CD4-positive, alpha-beta T cell (primary cell): ENCODE measurements at regions of chr5 and their contacts with region 1.

Region 1: DNA sequence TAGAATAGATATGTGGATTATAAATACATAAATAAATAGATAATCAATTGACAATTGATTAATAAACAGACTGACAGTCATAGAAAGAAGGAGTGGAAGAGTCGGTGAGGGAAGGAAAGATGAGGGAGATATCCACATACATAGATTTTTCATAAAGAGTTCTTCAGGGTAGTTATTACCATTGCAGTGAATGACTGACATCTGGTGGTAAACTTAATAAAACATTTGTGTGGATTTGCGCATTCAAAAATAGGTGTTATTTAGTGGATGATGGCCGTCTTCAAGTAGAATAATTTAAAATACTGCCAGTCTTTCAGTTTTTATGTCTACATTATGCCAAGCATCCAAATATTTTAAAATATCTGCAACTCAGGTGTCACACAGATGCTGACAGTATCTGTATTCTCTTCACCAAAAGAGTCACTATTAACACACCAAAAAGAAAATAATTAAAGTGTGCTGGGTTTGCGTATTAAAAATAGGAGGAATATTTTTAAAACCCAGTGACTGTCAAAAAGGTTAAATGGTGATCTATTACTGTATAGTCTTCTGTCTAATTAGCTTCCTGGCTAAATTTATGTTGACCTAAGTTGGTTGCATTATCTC is 78.8 kb downstream of the GIN1 start:
- DNase-seq: peak in 3 of 14 experiments; percentile 34 to 45 (median 43)
- ATAC-seq: no peak
- H3K4me3 ChIP-seq: no peak overlapping the region
- H3K4me3 Mint-ChIP-seq: no peak overlapping the region
- H3K27ac ChIP-seq: no peak overlapping the region
- H3K27ac Mint-ChIP-seq: no peak overlapping the region
- H3K4me1 ChIP-seq: no peaks in the 10 kb centered on the region
- H3K4me1 Mint-ChIP-seq: no peaks in the 10 kb centered on the region
- H3K27me3 ChIP-seq: no peaks in the 10 kb centered on the region
- H3K27me3 Mint-ChIP-seq: peaks cover 8% of the 10 kb centered on the region
- CTCF ChIP-seq: peak; percentile 44

Region 2: GRCh38 chr5:102583276-102584124 is 457.7 kb before region 1 on chr5:
- CTCF ChIA-PET with region 1: no interaction called
- POLR2A ChIA-PET with region 1: no interaction called
- intact Hi-C with region 1: loop called (anchors 2 to 5 kb)
- DNase-seq: peak in 3 of 14 experiments; percentile 2 to 11 (median 9)
- ATAC-seq: no peak
- H3K4me3 ChIP-seq: no peak overlapping the region
- H3K4me3 Mint-ChIP-seq: no peak overlapping the region
- H3K27ac ChIP-seq: no peak overlapping the region
- H3K27ac Mint-ChIP-seq: no peak overlapping the region
- H3K4me1 ChIP-seq: no peaks in the 10 kb centered on the region
- H3K4me1 Mint-ChIP-seq: no peaks in the 10 kb centered on the region
- H3K27me3 ChIP-seq: no peaks in the 10 kb centered on the region
- H3K27me3 Mint-ChIP-seq: no peaks in the 10 kb centered on the region
- CTCF ChIP-seq: peak; percentile 55

Region 3: DNA sequence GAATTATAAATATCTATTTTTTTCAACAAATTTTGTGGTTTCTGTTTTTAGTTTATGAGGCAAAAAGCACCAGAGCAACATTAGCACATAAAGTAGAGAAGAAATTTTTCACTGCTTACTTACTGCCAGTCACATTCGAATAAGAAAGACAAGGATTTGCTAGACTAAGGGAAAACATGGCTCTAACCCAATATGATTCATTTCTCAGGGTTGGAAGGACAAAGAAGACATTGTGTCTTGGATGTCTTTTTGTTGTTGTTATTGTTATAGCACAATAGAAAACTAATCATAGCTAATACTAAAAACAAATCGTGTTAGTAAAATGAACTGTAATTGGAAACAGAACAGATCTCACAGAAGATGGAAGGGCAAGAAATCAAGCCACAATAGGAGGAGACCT is 451.5 kb before region 1 on chr5:
- CTCF ChIA-PET with region 1: no interaction called
- POLR2A ChIA-PET with region 1: no interaction called
- intact Hi-C with region 1: loop called in 1 of 2 experiments (anchors 5 kb)
- DNase-seq: no peak
- ATAC-seq: no peak
- H3K4me3 ChIP-seq: no peak overlapping the region
- H3K4me3 Mint-ChIP-seq: no peak overlapping the region
- H3K27ac ChIP-seq: no peak overlapping the region
- H3K27ac Mint-ChIP-seq: no peak overlapping the region
- H3K4me1 ChIP-seq: no peaks in the 10 kb centered on the region
- H3K4me1 Mint-ChIP-seq: no peaks in the 10 kb centered on the region
- H3K27me3 ChIP-seq: no peaks in the 10 kb centered on the region
- H3K27me3 Mint-ChIP-seq: peaks cover 5% of the 10 kb centered on the region
- CTCF ChIP-seq: no peak

Region 4: DNA sequence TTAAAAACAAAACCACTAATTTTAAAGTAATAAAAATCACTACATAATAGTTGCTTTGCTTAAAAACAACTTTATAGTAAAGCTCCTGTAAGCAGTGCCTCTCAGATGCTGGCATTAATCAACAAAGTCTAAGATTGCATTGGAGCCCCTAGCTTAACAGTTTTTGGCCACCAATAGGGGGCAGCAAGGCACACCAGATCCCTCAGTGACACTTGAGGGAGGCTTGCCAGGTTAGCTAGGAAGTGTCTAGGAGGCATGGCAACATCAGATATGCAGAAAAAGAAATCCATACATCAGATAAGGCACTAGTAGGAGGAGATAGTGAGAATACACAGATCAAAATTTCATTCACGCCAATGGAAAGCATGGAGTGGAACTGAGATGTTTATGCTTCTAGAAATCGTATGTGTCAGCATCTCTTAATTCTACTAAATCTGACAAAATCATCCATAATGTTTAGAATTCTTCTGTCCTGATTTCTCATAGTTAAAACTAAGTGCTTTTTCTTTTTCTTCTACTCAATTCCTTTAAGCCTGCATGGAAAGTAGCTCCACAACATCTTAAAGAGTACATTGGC is 359.7 kb before region 1 on chr5:
- CTCF ChIA-PET with region 1: interaction called, 3 read pairs
- POLR2A ChIA-PET with region 1: no interaction called
- intact Hi-C with region 1: loop called (anchors 2 to 5 kb)
- DNase-seq: peak; percentile 19 to 71 (median 34)
- ATAC-seq: peak; percentile 44
- H3K4me3 ChIP-seq: no peak overlapping the region
- H3K4me3 Mint-ChIP-seq: no peak overlapping the region
- H3K27ac ChIP-seq: no peak overlapping the region
- H3K27ac Mint-ChIP-seq: no peak overlapping the region
- H3K4me1 ChIP-seq: no peaks in the 10 kb centered on the region
- H3K4me1 Mint-ChIP-seq: no peaks in the 10 kb centered on the region
- H3K27me3 ChIP-seq: no peaks in the 10 kb centered on the region
- H3K27me3 Mint-ChIP-seq: no peaks in the 10 kb centered on the region
- CTCF ChIP-seq: peak; percentile 63

Region 5: GRCh38 chr5:102778478-102778877 is 262.7 kb before region 1 on chr5:
- CTCF ChIA-PET with region 1: no interaction called
- POLR2A ChIA-PET with region 1: no interaction called
- intact Hi-C with region 1: loop called in 1 of 2 experiments (anchors 2 kb)
- DNase-seq: no peak
- ATAC-seq: no peak
- H3K4me3 ChIP-seq: no peak overlapping the region
- H3K4me3 Mint-ChIP-seq: no peak overlapping the region
- H3K27ac ChIP-seq: no peak overlapping the region
- H3K27ac Mint-ChIP-seq: no peak overlapping the region
- H3K4me1 ChIP-seq: peaks cover 3% of the 10 kb centered on the region
- H3K4me1 Mint-ChIP-seq: peaks cover 32% of the 10 kb centered on the region
- H3K27me3 ChIP-seq: no peaks in the 10 kb centered on the region
- H3K27me3 Mint-ChIP-seq: no peaks in the 10 kb centered on the region
- CTCF ChIP-seq: no peak

Region 6: DNA sequence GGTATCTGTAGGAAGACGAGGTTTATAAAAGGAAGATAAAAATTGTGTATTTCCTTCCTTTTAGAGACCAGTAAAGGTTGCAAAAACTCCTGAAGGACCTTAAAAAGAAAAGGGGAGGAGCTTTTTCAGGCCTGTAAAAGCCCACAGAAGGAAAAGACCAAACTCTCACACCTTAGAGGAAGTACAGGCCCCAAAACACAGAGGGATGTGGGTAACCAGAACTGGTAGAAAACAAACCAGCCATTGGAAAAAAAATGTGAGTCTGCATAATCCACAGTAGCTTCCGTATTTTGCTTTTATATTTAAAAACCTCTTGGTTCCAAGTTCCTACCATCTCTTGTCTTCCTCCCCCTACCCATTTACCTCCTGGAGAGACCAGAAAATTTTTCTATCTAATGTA is 70.3 kb after region 1 on chr5:
- CTCF ChIA-PET with region 1: no interaction called
- POLR2A ChIA-PET with region 1: no interaction called
- intact Hi-C with region 1: no loop called
- DNase-seq: peak in 4 of 14 experiments; percentile 11 to 87 (median 54)
- ATAC-seq: peak; percentile 94
- H3K4me3 ChIP-seq: no peak overlapping the region
- H3K4me3 Mint-ChIP-seq: peak overlapping the region; percentile 74
- H3K27ac ChIP-seq: peak overlapping the region in 1 of 2 donors; percentile 47
- H3K27ac Mint-ChIP-seq: peak overlapping the region; percentile 93
- H3K4me1 ChIP-seq: peaks cover 7% of the 10 kb centered on the region
- H3K4me1 Mint-ChIP-seq: peaks cover 57% of the 10 kb centered on the region
- H3K27me3 ChIP-seq: no peaks in the 10 kb centered on the region
- H3K27me3 Mint-ChIP-seq: no peaks in the 10 kb centered on the region
- CTCF ChIP-seq: no peak